Thyroid gland (tissue), 4 donors: ENCODE measurements at regions of chr10 and their contacts with region 1.

Region 1: DNA sequence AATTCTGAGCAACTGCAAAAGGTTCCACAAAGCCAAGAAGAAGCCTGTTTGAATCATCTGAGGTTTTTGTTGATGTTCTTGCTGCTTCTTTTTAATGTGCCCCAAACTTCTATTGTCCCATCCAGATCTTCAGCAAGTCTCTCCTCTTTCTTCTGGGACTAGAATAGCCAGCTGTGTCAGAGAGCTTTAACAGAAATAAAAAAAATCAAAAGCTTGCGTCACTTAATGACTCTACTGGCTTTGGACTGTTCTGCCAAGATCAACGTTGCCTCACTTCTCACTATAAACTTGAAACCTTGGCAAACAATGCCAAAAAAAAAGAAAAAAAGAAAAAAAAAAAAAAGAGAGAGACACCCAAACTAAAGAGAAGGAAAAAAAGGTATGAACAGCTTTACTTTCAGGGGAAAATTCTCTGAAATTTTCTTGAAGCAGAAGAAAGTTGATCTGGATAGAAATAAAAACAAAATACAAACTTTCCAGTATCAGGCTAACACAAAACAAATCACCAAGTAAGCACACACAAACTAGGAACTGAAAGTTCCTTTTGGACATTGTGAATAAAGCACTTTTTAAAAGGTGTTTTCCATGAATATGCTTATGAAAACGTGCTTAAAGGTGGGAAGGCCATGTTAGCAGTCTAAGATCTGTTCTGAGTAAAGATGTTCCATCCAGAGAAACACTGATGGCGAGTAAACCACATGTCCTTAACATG is 14.8 kb downstream of the USP54 start:
- DNase-seq: peak; percentile 51 to 55
- H3K4me3 ChIP-seq: peak overlapping the region; percentile 29 to 39 (median 30)
- H3K27ac ChIP-seq: peak overlapping the region; percentile 94 to 97 (median 94)
- H3K4me1 ChIP-seq: peaks cover 17 to 30% of the 10 kb centered on the region in 2 donors
- H3K27me3 ChIP-seq: no peaks in the 10 kb centered on the region
- CTCF ChIP-seq: no peak
- POLR2A ChIP-seq: peak; percentile 84 to 98

Region 2: GRCh38 chr10:73625884-73626752 is 49.8 kb after region 1 on chr10:
- intact Hi-C with region 1: loop called (anchors 5 kb)
- DNase-seq: peak; percentile 95 to 97
- H3K4me3 ChIP-seq: peak overlapping the region; percentile 51 to 86 (median 84)
- H3K27ac ChIP-seq: peak overlapping the region; percentile 66 to 87 (median 69)
- H3K4me1 ChIP-seq: peaks cover 3 to 22% of the 10 kb centered on the region in 2 donors
- H3K27me3 ChIP-seq: no peaks in the 10 kb centered on the region
- CTCF ChIP-seq: no peak
- POLR2A ChIP-seq: peak in 1 of 2 donors; percentile 83

Region 3: DNA sequence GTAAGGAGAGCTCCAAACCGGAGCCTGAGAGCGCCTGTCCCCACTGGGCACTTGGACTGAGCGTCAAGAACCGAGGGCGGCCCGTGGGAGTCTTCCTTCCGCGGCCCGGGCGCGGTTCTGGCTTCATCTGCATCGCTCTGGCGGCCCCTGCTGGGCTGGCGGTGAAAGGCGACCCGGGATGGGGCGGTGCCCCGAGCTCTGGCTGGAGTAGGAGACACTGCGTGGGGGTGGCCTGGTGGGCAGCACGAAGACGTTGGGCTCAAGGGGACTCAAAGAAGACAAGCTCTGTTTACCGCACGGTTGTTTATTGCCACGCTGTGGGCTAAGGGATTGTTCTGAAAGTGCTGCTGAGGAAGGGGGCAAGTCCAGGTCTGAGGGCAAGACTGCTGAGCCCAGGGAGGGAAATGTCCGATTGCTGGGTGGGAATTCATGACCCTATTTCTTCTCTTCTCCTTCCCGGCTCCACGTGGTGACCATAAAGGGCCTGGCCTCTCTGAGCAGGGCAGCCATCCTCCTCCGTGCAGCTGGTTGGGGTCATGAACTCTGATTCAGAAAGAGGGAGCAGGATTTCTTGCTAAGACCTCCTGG is 364.4 kb after region 1 on chr10:
- intact Hi-C with region 1: no loop called
- DNase-seq: peak; percentile 77 to 84
- H3K4me3 ChIP-seq: no peak overlapping the region
- H3K27ac ChIP-seq: no peak overlapping the region
- H3K4me1 ChIP-seq: peaks cover 0 to 21% of the 10 kb centered on the region in 2 donors
- H3K27me3 ChIP-seq: no peaks in the 10 kb centered on the region
- CTCF ChIP-seq: peak; percentile 85 to 96 (median 93)
- POLR2A ChIP-seq: no peak